ENCODE measurements at regions of chr6 and their contacts with region 1.

Region 1: GRCh38 chr6:3075522-3076113 is 7.3 kb downstream of the RIPK1 start:
- DNase-seq: no peak
- ATAC-seq: no peak
- H3K4me3 ChIP-seq: no peak overlapping the region
- H3K27ac ChIP-seq: no peak overlapping the region
- H3K4me1 ChIP-seq: peaks cover 26% of the 10 kb centered on the region
- H3K27me3 ChIP-seq: no peaks in the 10 kb centered on the region
- CTCF ChIP-seq: no peak

Region 2: DNA sequence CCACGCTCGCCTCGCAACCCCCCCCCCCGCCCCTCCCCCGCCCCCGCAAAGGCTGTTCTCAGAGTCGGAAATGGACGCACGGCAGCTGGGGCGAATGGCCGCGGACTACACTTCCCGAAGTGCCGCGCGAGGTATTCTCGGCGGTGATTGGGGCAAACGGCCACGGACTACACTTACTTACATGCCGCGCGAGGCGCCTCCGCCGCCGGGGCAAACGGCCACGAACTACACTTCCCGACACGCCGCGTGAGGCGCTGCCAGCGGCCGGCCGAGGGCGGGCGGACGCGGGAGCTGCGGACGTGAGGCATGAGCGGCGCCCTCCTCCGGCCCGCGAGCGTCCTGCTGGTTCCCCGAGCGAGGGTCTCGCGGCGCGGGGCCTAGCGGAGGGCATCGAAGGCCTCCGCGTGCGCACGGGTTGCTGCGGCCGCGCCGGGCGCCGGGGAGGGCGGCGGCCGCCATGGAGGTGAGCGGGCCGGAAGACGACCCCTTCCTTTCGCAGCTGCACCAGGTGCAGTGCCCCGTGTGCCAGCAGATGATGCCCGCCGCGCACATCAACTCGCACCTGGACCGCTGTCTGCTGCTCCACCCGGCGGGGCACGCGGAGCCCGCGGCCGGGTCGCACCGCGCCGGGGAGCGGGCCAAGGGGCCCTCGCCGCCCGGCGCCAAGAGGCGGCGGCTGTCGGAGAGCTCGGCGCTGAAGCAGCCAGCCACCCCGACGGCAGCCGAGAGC is 310.3 kb before region 1 on chr6 and contains the start of gene WRNIP1:
- intact Hi-C with region 1: loop called in 1 of 2 experiments (anchors 10 kb)
- DNase-seq: peak; percentile 100
- ATAC-seq: peak; percentile 89 to 92 (median 90)
- H3K4me3 ChIP-seq: peak within 1 kb of the TSS; percentile 86
- H3K27ac ChIP-seq: peak within 1 kb of the TSS; percentile 93
- H3K4me1 ChIP-seq: peaks cover 32% of the 10 kb centered on the region
- H3K27me3 ChIP-seq: no peaks in the 10 kb centered on the region
- CTCF ChIP-seq: peak; percentile 71
- total RNA-seq, gene WRNIP1: 26.5 to 53.3 (median 41.3) TPM

Region 3: GRCh38 chr6:3109761-3110160 is 34.1 kb after region 1 on chr6:
- intact Hi-C with region 1: loop called in 1 of 2 experiments (anchors 5 kb)
- DNase-seq: no peak
- ATAC-seq: no peak
- H3K4me3 ChIP-seq: no peak overlapping the region
- H3K27ac ChIP-seq: no peak overlapping the region
- H3K4me1 ChIP-seq: no peaks in the 10 kb centered on the region
- H3K27me3 ChIP-seq: no peaks in the 10 kb centered on the region
- CTCF ChIP-seq: no peak

Region 4: GRCh38 chr6:3118353-3119039 is 42.9 kb after region 1 on chr6 and contains the start of gene BPHL:
- intact Hi-C with region 1: loop called (anchors 5 kb)
- DNase-seq: peak; percentile 98 to 100
- ATAC-seq: peak; percentile 98 to 99 (median 99)
- H3K4me3 ChIP-seq: peak within 1 kb of the TSS; percentile 86
- H3K27ac ChIP-seq: peak within 1 kb of the TSS; percentile 88
- H3K4me1 ChIP-seq: peaks cover 9% of the 10 kb centered on the region
- H3K27me3 ChIP-seq: no peaks in the 10 kb centered on the region
- CTCF ChIP-seq: no peak
- total RNA-seq, gene BPHL: 6.7 to 22.8 (median 13.5) TPM

Measured in psoas muscle (tissue), 8 donors.